BJ (cell line): ENCODE measurements at regions of chr3 and their contacts with region 1.

Region 1: DNA sequence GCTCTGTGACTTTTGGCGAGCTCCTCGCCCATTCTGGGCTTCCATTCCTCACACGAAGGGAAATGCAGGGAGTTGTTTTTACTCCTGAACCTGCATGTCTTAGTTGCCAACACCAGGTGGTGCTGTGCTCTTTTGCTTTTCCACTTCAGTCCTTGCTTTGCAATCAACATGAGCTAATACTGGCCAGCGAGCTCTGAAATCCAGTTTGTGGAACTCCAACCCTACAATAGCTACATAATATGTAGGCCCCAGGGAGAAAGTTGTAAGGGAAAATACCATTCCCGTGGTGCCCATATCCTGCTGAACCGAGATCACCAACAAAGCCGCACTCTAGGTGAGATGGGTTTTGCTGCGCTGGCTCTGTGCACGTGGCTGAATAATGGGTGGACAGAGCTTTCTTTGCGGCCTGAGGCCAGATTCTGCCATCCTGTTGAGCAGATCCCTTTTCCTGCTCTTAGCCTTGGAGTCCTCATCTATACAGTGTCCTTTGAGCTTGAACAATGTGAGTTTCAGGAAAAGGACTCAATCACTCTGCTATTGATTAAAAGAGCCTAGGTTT is 25.0 kb downstream of the LSM3 start:
- DNase-seq: no peak
- H3K4me3 ChIP-seq: no peak overlapping the region
- H3K27me3 ChIP-seq: no peaks in the 10 kb centered on the region
- CTCF ChIP-seq: peak; percentile 84

Region 2: GRCh38 chr3:13391308-13391707 is 812.3 kb before region 1 on chr3:
- CTCF ChIA-PET with region 1: no interaction called
- POLR2A ChIA-PET with region 1: no interaction called
- DNase-seq: no peak
- H3K4me3 ChIP-seq: no peak overlapping the region
- H3K27me3 ChIP-seq: 0 out of 2 replicates have a peak, but pooled peaks cover 1% of the 10 kb centered on the region
- CTCF ChIP-seq: 0 out of 2 replicates have a peak, but pooled peaks have one; percentile 5

Region 3: DNA sequence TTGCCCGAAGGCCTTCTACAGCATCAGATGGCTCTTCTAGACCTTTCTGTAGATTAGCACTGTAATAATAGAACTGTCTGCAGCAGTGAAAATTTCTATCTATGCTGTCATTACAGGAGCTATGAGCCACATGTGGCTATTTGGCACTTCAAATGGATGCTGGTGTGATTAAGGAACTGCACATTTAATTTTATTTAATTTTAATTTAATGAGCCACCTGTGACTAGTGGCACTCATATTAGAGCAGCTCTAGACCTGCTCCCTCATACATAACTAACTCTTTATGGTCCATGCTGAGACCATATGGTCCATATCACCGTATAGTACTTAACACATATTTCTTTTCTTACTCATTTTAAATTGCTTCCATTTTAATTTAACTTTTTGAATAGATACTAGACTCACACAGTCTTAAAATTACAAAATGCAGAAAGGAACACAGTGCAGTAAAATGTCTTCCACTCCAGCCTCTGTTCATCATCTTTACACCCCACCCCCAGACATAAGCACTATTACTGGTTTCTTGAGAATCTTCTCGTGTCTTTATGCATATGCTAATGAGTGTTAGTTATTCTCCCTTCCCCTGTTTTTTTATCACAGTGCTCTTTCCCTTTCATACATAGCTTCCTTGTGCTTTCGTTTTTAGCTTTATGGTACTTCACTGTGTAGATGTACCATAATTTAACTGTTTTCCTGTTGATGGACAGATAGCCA is 15.4 kb before region 1 on chr3:
- CTCF ChIA-PET with region 1: interaction called, 11 read pairs
- POLR2A ChIA-PET with region 1: no interaction called
- DNase-seq: no peak
- H3K4me3 ChIP-seq: no peak overlapping the region
- H3K27me3 ChIP-seq: no peaks in the 10 kb centered on the region
- CTCF ChIP-seq: no peak

Region 4: DNA sequence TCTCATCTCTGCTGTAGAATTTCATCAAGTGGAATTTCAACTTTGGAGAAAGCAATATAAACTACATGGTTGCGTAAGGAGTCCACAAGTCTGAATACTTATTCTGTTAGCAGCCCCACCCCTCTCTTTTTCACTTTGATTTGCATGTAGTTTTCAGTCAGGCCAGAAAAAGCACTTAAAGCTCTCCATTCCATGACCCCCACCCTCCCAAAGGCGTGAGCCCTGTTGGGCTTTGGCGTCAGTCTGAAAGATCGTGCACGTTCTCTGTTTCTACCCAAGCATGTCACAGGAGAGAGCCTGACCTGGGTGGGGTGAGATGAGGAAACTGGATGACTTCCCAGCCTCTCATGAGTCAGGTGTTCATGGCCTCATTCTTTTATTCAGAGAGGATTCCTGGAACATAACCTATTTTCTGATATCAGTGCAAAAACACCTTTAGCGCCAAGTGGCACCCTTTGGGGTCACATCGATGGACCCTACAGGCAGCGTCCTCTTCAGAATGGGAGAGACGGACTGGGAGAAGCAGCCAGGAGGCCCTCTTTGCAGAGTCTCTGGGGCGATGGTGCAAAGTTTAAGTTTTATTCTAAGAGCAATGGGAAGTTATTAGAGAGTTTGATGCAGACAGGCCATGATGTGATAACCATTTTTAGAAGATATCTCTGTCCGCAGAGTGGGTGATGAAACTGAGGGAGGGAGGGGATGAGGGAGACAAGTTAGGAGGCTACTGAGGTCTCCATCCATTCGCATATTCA is 30.8 kb after region 1 on chr3:
- CTCF ChIA-PET with region 1: interaction called, 25 read pairs
- POLR2A ChIA-PET with region 1: no interaction called
- DNase-seq: no peak
- H3K4me3 ChIP-seq: no peak overlapping the region
- H3K27me3 ChIP-seq: no peaks in the 10 kb centered on the region
- CTCF ChIP-seq: no peak

Region 5: GRCh38 chr3:14261229-14261628 is 57.6 kb after region 1 on chr3:
- CTCF ChIA-PET with region 1: interaction called, 93 read pairs
- POLR2A ChIA-PET with region 1: no interaction called
- DNase-seq: peak; percentile 14
- H3K4me3 ChIP-seq: no peak overlapping the region
- H3K27me3 ChIP-seq: no peaks in the 10 kb centered on the region; the same call in 1 of the 2 replicates
- CTCF ChIP-seq: peak; percentile 98

Region 6: DNA sequence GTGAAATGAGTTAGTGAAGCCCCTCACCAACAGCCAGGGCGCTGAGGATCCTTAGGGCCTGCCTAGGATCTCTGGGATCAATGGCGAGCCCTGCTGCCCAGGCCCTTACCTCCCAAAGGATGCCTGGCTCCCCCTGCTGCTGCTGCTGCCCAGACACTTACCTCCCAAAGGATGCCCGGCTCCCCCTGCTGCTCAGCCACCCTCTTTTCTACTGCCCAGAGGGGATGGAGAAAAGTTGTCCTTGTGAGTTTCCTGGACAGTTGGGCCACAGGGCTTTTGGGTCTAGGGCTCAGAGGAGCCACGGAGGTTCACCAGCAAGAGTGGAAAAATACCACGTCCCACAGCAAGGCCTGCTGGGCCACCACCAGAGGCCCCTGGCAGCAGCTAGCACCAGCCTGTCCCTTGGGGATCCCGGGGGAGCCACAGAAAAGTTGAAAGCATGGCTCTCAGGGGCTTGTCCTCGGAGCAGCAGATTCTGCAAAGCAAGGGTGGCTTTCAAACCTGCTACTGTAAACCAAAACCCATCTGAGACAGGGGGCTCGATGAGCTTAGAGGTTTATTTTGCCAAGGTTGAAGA is 258.2 kb after region 1 on chr3:
- CTCF ChIA-PET with region 1: interaction called, 62 read pairs
- POLR2A ChIA-PET with region 1: no interaction called
- DNase-seq: no peak
- H3K4me3 ChIP-seq: no peak overlapping the region
- H3K27me3 ChIP-seq: no peaks in the 10 kb centered on the region
- CTCF ChIP-seq: peak; percentile 66

Region 7: DNA sequence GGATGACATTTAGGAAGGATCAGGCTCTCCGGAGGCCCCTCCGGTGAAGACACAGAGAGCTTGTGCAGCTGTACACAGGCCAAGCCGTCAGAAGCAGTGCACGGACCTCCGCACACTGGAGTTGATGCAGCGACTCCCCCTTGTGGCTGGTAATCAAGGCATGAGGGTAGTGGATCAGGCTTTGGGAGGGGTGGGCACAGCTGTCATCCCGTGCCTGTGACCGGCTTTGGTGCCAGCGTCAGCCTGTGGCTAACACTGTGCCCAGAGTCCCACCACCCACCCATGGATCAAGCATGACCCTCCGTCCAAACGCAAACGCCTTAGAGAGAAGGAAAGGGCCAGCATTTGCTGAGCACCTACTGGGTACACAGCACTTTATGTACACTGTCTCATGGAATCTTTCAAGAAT is 344.7 kb after region 1 on chr3:
- CTCF ChIA-PET with region 1: interaction called, 46 read pairs
- POLR2A ChIA-PET with region 1: no interaction called
- DNase-seq: no peak
- H3K4me3 ChIP-seq: no peak overlapping the region
- H3K27me3 ChIP-seq: peaks cover 7% of the 10 kb centered on the region
- CTCF ChIP-seq: peak; percentile 84